MCF 10A (cell line): ENCODE measurements at regions of chr18 and their contacts with region 1.

Region 1: DNA sequence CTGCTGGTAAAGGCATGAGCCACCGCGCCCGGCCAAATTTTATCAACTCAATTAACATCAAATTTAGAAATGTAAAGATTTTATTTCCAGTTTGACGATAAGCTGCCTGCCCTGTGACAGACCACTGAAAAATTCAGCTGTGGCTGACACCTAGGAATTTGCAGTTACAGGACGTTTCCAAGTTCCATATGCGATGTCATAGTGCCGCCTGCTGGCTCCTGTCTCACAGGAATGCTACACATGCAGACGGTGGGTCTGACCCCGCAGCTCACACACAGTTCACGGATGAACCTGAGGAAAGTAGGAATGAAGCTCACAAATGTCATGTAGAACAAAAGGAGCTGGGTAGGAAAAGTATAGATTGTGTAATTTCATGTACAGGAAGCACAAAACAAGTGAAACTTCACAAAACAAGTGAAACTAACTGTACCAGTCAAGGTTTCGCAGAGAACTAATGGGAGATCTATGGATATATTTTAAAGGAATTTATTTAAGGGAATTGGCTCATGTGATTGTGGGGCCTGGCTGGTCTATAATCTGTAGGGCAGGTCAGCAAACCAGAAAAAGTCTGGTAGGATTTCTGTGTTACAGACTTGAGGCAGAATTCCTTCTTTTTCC is 13.2 kb upstream of the SEH1L start:
- DNase-seq: peak; percentile 86
- H3K4me3 Mint-ChIP-seq: no peak overlapping the region
- H3K27ac Mint-ChIP-seq: no peak overlapping the region
- H3K4me1 Mint-ChIP-seq: peaks cover 6% of the 10 kb centered on the region
- H3K27me3 Mint-ChIP-seq: no peaks in the 10 kb centered on the region
- CTCF ChIP-seq: peak; percentile 93

Region 2: DNA sequence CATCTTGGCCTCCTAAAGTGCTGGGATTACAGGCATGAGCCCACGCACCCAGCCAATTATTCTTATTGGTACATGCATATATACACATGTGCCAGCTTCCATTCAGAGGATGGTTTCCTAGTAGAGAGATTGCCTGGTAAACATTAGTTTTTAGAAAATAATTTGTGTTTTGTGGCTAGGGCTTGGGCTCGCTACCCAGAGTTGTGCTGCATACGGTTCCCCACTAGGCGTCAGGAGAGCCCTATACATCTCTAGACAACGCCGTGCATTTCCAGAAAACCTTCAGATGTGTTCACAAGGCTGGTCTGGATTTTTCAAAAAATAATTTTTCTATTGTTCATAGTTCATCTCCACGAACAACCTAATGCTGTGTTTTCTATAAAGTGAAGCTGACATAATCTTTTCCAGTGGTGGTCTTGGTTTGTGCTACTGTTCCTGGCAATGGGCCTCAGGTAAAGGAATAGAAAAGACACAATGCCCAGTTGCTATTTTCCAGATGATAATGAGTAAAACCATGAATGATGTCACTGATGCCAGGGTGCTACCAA is 542.9 kb before region 1 on chr18:
- CTCF ChIA-PET with region 1: interaction called, 5 read pairs
- POLR2A ChIA-PET with region 1: no interaction called
- intact Hi-C with region 1: loop called (anchors 5 kb)
- DNase-seq: peak; percentile 75
- H3K4me3 Mint-ChIP-seq: no peak overlapping the region
- H3K27ac Mint-ChIP-seq: no peak overlapping the region
- H3K4me1 Mint-ChIP-seq: peaks cover 6% of the 10 kb centered on the region
- H3K27me3 Mint-ChIP-seq: no peaks in the 10 kb centered on the region
- CTCF ChIP-seq: peak; percentile 91

Region 3: DNA sequence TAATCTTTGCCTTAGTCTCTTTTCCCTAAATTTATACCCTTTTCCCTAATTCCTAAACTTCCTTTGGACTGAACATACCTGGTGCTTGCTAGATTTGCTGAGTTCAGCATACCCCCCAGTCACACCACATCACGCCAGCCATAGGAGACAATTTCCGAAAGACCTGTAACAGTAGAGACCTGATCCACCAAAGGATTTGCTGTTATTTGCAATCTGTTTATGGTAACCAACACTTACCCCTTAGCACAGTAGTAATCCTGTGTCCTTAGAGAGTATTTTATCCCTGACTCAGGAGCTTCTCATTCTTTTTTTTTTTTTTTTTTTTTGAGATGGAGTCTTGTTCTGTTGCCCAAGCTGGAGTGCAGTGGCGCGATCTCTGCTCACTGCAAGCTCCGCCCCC is 223.1 kb before region 1 on chr18:
- CTCF ChIA-PET with region 1: interaction called, 17 read pairs
- POLR2A ChIA-PET with region 1: no interaction called
- intact Hi-C with region 1: no loop called
- DNase-seq: no peak
- H3K4me3 Mint-ChIP-seq: no peak overlapping the region
- H3K27ac Mint-ChIP-seq: no peak overlapping the region
- H3K4me1 Mint-ChIP-seq: no peaks in the 10 kb centered on the region
- H3K27me3 Mint-ChIP-seq: no peaks in the 10 kb centered on the region
- CTCF ChIP-seq: no peak

Region 4: GRCh38 chr18:12737243-12737902 is 197.2 kb before region 1 on chr18:
- CTCF ChIA-PET with region 1: interaction called, 85 read pairs
- POLR2A ChIA-PET with region 1: interaction called, 10 read pairs
- intact Hi-C with region 1: no loop called
- DNase-seq: no peak
- H3K4me3 Mint-ChIP-seq: no peak overlapping the region
- H3K27ac Mint-ChIP-seq: no peak overlapping the region
- H3K4me1 Mint-ChIP-seq: peaks cover 11% of the 10 kb centered on the region
- H3K27me3 Mint-ChIP-seq: no peaks in the 10 kb centered on the region
- CTCF ChIP-seq: no peak

Region 5: DNA sequence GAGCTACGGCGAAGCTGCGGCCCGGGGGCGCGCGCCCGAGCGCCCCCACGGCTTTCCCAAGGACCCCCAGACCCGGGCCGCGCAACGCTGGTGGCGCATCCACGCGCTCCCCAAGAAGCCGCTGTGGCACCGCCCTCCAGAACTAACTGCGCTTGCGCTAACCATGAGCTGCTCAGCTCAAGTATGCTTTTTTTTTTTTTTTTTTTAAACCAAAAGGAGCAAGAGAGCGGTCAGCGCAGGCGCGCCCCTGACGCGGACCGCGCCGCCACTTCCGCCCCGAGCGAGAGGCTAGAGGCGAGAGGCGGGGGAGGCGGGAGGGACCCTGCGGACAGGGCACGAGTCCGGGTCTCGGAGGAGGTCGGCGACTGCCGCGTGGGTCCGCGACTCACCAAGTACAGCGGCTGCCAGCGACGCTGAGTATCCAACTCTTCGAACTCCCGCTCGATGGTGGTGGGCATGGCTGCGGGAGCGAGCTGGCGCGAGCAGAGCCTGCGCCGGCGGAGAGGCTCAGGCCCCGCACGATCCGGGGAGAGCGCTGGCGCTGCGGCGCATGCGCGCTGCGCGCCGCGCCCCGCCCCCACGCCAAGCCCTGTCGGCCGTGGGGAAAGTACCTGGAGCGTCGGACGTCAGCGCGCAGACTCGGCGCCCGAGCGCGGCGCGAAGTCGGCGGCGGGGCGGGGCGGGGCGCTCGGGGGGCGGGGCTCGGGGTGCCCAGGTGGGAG is 50.7 kb before region 1 on chr18 and contains the start of gene PTPN2:
- CTCF ChIA-PET with region 1: interaction called, 19 read pairs
- POLR2A ChIA-PET with region 1: no interaction called
- intact Hi-C with region 1: no loop called
- DNase-seq: peak; percentile 89
- H3K4me3 Mint-ChIP-seq: peak within 1 kb of the TSS; percentile 73
- H3K27ac Mint-ChIP-seq: peak within 1 kb of the TSS; percentile 96
- H3K4me1 Mint-ChIP-seq: peaks cover 29% of the 10 kb centered on the region
- H3K27me3 Mint-ChIP-seq: no peaks in the 10 kb centered on the region
- CTCF ChIP-seq: no peak
- total RNA-seq, gene PTPN2: 60.0 and 75.2 TPM in 2 replicates

Region 6: GRCh38 chr18:12921178-12921577 is 13.4 kb before region 1 on chr18:
- CTCF ChIA-PET with region 1: interaction called, 34 read pairs
- POLR2A ChIA-PET with region 1: no interaction called
- intact Hi-C with region 1: no loop called
- DNase-seq: no peak
- H3K4me3 Mint-ChIP-seq: no peak overlapping the region
- H3K27ac Mint-ChIP-seq: no peak overlapping the region
- H3K4me1 Mint-ChIP-seq: no peaks in the 10 kb centered on the region
- H3K27me3 Mint-ChIP-seq: no peaks in the 10 kb centered on the region
- CTCF ChIP-seq: no peak

Region 7: GRCh38 chr18:14221692-14222091 is 1287.1 kb after region 1 on chr18:
- CTCF ChIA-PET with region 1: no interaction called
- POLR2A ChIA-PET with region 1: no interaction called
- intact Hi-C with region 1: no loop called
- DNase-seq: no peak
- H3K4me3 Mint-ChIP-seq: no peak overlapping the region
- H3K27ac Mint-ChIP-seq: no peak overlapping the region
- H3K4me1 Mint-ChIP-seq: no peaks in the 10 kb centered on the region
- H3K27me3 Mint-ChIP-seq: no peaks in the 10 kb centered on the region
- CTCF ChIP-seq: no peak